ENCODE measurements at regions of chr6 and their contacts with region 1.

Region 1: DNA sequence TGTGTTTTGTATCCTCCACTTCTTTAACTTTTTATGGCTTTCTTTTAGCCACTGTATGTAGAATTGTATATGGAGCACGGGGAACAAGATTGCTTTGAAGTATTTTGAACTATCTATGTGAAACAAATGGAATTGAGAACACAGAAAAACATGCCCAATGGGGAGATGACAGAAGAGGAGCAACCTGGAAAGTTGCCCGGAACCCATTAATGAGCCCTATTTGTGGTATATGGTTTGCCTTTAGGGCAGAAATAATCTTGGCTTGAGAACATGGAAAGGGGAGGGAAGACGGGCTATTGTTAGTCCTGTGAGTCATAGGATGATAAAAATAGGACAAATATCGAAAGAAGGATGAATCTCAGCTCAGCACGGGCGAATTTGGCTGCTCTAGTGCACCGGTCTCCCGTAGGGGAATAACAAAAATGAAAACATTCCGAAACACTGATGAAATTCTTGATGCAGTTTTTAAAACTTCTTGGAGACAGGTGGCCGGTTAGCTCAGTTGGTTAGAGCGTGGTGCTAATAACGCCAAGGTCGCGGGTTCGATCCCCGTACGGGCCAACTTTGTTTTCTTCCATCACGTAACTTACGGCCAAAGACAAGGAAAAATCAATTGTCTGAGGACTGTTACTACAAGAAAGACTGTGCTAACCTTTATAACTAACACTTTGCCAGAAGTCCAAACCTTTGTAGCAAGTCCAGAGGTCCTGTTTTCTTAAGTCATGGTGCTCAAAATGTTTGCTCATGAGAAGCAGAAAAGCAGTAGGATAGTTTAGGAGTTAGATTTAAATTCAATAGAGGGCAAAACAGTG is 15.7 kb downstream of the HMGN4 start:
- DNase-seq: peak; percentile 82 to 93
- ATAC-seq: peak; percentile 92
- H3K4me3 ChIP-seq: peak overlapping the region; percentile 36 to 60
- H3K27ac ChIP-seq: peak overlapping the region; percentile 12 to 45
- H3K4me1 ChIP-seq: peaks cover 0 to 4% of the 10 kb centered on the region in 2 donors
- H3K27me3 ChIP-seq: no peaks in the 10 kb centered on the region

Region 2: GRCh38 chr6:26175428-26176181 is 378.2 kb before region 1 on chr6:
- intact Hi-C with region 1: loop called in 1 of 2 experiments (anchors 10 kb)
- DNase-seq: no peak
- ATAC-seq: no peak
- H3K4me3 ChIP-seq: no peak overlapping the region
- H3K27ac ChIP-seq: no peak overlapping the region
- H3K4me1 ChIP-seq: peaks cover 0 to 1% of the 10 kb centered on the region in 2 donors
- H3K27me3 ChIP-seq: no peaks in the 10 kb centered on the region

Region 3: GRCh38 chr6:26520853-26521599 is 32.8 kb before region 1 on chr6:
- intact Hi-C with region 1: loop called in 1 of 2 experiments (anchors 2 kb)
- DNase-seq: peak; percentile 93 to 94
- ATAC-seq: peak; percentile 96
- H3K4me3 ChIP-seq: peak overlapping the region; percentile 52 to 90
- H3K27ac ChIP-seq: peak overlapping the region; percentile 80 to 95
- H3K4me1 ChIP-seq: peaks cover 0 to 1% of the 10 kb centered on the region in 2 donors
- H3K27me3 ChIP-seq: no peaks in the 10 kb centered on the region

Region 4: DNA sequence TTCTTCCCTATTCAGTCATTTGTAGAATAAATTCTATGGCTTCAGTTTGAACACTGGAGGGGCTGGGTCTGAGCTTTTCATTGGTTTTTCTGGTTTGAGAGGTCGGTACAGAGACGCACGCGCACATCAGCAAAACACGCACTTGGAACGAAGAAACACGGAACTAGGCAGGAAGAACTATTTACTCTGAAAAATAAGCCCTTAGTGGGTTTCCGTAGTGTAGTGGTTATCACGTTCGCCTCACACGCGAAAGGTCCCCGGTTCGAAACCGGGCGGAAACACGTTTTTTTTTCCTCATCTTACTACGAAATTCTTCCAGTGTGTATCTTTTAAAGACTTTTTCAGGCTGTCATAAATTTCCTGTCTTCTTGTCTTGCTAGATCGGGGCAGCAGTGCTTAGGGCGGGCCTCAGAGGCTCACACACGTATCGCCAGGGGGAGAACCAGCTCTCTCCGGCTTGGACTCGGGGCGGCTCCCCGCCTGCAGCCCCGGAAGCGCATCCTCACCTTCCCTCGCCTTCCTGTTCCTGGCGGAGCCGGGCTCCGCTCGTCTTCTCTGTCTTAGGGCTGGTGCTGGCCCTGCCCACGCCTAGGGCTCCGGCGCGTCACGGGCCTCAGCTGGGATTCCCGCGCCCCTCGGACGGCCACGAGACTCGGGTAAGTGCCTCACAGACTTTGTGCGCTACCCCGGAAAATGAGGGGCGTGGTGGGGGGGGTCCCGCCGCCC is 15.8 kb before region 1 on chr6 and contains the start of gene HMGN4:
- intact Hi-C with region 1: loop called (anchors 1 to 2 kb)
- DNase-seq: peak; percentile 88 to 91
- ATAC-seq: peak; percentile 94
- H3K4me3 ChIP-seq: peak within 1 kb of the TSS; percentile 73 to 79
- H3K27ac ChIP-seq: peak within 1 kb of the TSS; percentile 83 to 87
- H3K4me1 ChIP-seq: peaks cover 2 to 3% of the 10 kb centered on the region in 2 donors
- H3K27me3 ChIP-seq: no peaks in the 10 kb centered on the region
- total RNA-seq, gene HMGN4: 48.4 to 69.0 TPM